Panc1 (cell line): ENCODE measurements at regions of chr3 and their contacts with region 1.

Region 1: GRCh38 chr3:195035345-195036190 is 235.4 kb downstream of the XXYLT1 start:
- DNase-seq: no peak
- ATAC-seq: peak; percentile 40
- H3K4me3 ChIP-seq: no peak overlapping the region
- H3K27ac ChIP-seq: peak overlapping the region; percentile 89
- H3K4me1 ChIP-seq: peaks cover 63% of the 10 kb centered on the region
- H3K27me3 ChIP-seq: no peaks in the 10 kb centered on the region
- CTCF ChIP-seq: no peak; the same call in 1 of the 2 replicates

Region 2: GRCh38 chr3:195054311-195054710 is 18.7 kb after region 1 on chr3:
- CTCF ChIA-PET with region 1: interaction called, 3 read pairs
- POLR2A ChIA-PET with region 1: interaction called, 12 read pairs
- in situ Hi-C with region 1: no loop called
- intact Hi-C with region 1: no loop called
- DNase-seq: no peak
- ATAC-seq: no peak
- H3K4me3 ChIP-seq: no peak overlapping the region
- H3K27ac ChIP-seq: no peak overlapping the region
- H3K4me1 ChIP-seq: no peaks in the 10 kb centered on the region
- H3K27me3 ChIP-seq: no peaks in the 10 kb centered on the region
- CTCF ChIP-seq: no peak

Region 3: DNA sequence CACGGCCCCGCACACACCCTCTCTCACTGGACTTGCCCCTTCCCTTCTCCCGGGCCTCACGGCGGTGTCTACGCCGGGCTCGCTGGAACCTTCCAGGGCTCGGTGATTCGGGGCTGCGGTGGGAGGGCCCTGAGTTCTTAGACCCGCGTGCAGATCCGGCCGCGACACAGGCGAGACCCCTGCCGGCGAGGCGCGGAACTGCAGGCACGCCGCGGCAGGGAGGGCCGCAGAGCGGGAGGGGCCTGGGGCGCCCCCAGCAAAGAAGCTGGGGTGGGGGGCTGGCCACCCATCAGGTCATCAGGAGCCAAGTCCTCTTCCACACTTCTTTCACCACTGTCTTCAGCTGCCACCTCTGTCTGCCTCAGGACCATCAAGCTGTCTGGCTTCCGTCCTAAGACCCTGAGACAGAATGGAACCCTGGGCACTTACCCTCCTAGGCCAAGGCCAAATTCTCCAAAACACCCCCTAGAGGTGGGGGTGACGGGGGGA is 70.9 kb after region 1 on chr3:
- CTCF ChIA-PET with region 1: no interaction called
- POLR2A ChIA-PET with region 1: no interaction called
- in situ Hi-C with region 1: no loop called
- intact Hi-C with region 1: loop called (anchors 5 kb)
- DNase-seq: no peak
- ATAC-seq: peak; percentile 77
- H3K4me3 ChIP-seq: peak overlapping the region in 1 of 2 experiments; percentile 39; a peak in 2 of 4 replicates
- H3K27ac ChIP-seq: peak overlapping the region; percentile 100
- H3K4me1 ChIP-seq: peaks cover 53% of the 10 kb centered on the region
- H3K27me3 ChIP-seq: no peaks in the 10 kb centered on the region
- CTCF ChIP-seq: peak; percentile 100